Activated T-helper 1 cell treated with anti-CD3 and anti-CD28 coated beads, Interleukin-12 subunit alpha, Interleukin-12 subunit beta, Interleukin-2, Interleukin-4 antibody, amounts not matched to agents 30 ng/mL and 10 ng/mL and 1 ng/mL, durations not matched to agents 14 hours and 24 hours and 36 hours (primary cell): ENCODE measurements at regions of chrX and their contacts with region 1.

Region 1: DNA sequence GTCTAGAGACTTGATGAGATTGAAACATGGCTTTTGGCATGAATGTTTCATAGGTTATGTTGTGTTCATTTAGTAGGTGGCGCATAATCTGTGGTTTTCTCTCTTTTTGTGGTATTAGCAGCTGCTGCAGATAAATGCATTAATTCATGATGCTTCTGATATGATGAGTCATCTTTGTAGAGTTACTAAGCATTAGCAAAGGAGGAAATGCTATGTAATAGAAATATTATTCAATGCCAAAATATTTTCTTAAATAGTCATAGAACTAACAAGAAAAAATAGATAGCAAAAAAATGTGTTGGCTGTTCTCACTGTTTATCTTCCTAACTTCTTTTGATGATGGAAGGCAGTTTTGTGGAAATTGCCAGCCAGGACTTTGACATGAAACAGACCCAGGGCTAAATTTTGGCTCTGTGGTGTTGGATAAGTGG is 3.6 kb downstream of the ZXDB start:
- DNase-seq: no peak
- H3K4me3 Mint-ChIP-seq: peak overlapping the region; percentile 78
- H3K27ac Mint-ChIP-seq: peak overlapping the region; percentile 67
- H3K4me1 Mint-ChIP-seq: peaks cover 34% of the 10 kb centered on the region
- H3K27me3 Mint-ChIP-seq: no peaks in the 10 kb centered on the region

Region 2: DNA sequence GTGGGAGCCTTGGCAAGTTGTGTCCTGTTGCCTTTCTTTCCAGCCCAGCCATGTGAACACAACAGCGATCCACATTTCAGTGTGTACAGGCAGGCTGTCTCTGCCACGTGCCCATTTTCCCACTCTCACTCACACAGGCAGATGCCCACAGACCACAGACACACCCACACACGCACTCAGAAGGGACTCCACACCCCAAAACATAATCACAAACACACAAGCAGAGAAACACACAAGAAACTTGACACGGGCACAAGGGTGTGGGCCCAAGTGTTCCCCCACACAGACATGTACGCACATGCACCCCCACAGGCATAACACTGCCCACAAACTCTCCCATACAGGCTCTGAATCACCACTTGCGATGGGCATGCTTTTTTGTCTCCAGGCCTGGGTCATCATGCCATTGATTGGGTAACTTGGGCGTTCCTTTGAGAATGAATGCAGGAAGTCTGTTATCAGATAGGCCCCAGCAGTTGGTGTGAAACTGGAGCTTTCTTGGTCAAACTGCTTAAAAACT is 782.0 kb before region 1 on chrX:
- intact Hi-C with region 1: loop called (anchors 5 kb)
- DNase-seq: peak; percentile 32
- H3K4me3 Mint-ChIP-seq: peak overlapping the region; percentile 80
- H3K27ac Mint-ChIP-seq: peak overlapping the region; percentile 97
- H3K4me1 Mint-ChIP-seq: peaks cover 38% of the 10 kb centered on the region
- H3K27me3 Mint-ChIP-seq: no peaks in the 10 kb centered on the region

Region 3: DNA sequence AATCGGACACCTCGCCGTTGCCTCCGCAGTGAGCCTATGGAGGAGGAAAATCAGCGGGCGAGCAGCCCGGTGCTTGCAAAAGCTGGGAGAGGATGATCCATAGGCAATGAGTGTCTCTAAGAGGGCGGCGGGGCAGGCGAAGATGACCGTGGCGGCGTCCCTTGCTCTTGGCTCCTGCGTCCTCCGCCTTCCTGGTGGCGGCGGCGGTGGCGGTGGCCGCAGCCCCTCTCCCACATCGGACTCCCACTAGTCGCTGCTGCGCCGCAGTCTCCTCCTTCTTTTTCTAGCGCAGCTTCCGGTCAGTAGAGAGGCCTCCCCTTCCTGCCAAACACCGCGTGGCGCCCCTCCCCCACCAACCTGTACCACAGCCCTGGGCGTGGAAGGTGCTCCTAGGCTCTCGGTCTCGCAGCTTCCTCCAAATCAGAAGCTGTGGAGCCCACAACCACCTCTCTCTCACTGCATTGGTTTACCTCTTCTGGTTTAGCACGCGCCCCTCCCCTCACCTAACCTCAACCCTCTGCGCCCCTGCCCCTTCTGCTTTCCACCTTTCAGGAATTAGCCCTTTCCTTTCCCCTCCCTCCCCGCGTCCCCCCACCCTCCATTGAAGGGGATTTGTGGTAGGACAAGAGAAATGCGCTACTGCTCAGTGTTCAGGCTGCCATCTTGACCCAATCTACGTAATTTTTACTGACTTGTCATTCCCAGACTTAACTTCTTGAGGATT is 600.0 kb before region 1 on chrX and contains the start of gene SPIN3:
- intact Hi-C with region 1: loop called (anchors 5 kb)
- DNase-seq: peak; percentile 42
- H3K4me3 Mint-ChIP-seq: peak within 1 kb of the TSS; percentile 90
- H3K27ac Mint-ChIP-seq: peak within 1 kb of the TSS; percentile 83
- H3K4me1 Mint-ChIP-seq: peaks cover 18% of the 10 kb centered on the region
- H3K27me3 Mint-ChIP-seq: no peaks in the 10 kb centered on the region
- total RNA-seq, gene SPIN3: 9.4 and 9.6 TPM in 2 replicates

Region 4: DNA sequence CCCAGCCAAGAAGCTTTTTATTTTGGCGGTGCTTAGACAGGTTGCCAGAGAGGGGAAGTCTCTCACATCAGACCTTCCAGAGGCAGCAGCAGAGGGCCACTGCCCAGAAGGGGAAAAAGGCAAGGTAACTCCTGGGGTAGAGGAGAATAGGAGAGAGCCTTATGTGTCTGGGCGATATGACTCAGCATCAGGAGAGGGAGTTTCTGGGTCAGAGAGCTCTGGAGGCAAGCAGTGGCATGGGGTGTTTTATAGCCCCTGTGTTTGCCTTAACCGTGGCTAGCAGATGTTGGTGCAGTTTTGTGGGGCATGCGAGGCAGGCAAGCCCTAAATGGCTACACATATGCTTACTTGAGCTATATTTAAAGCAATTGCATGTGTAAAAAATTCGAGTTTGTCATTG is 11.9 kb before region 1 on chrX:
- intact Hi-C with region 1: no loop called
- DNase-seq: no peak
- H3K4me3 Mint-ChIP-seq: no peak overlapping the region
- H3K27ac Mint-ChIP-seq: no peak overlapping the region
- H3K4me1 Mint-ChIP-seq: no peaks in the 10 kb centered on the region
- H3K27me3 Mint-ChIP-seq: no peaks in the 10 kb centered on the region

Region 5: DNA sequence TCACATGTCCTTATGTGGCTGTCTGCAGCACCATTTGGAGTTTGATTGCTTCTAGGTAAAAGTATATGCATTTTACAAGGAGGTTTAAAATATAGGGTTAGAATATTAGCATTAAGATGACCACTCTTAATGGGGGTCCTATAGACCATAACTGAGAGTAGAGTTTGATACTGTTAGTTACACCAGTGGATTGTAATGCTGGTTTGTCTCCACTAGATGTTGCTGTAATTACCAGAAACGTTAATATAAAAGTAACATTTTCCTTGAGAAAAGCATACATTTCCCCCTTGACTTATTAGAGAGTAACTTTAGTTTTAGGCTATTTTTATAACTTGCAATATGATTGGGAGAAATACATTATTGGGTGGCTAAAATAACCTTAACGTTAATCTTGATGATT is 221.9 kb after region 1 on chrX:
- intact Hi-C with region 1: no loop called
- DNase-seq: no peak
- H3K4me3 Mint-ChIP-seq: no peak overlapping the region
- H3K27ac Mint-ChIP-seq: no peak overlapping the region
- H3K4me1 Mint-ChIP-seq: no peaks in the 10 kb centered on the region
- H3K27me3 Mint-ChIP-seq: peaks cover 2% of the 10 kb centered on the region

Region 6: GRCh38 chrX:57906790-57907189 is 311.4 kb after region 1 on chrX:
- intact Hi-C with region 1: loop called (anchors 5 kb)
- DNase-seq: no peak
- H3K4me3 Mint-ChIP-seq: peak overlapping the region; percentile 53
- H3K27ac Mint-ChIP-seq: no peak overlapping the region
- H3K4me1 Mint-ChIP-seq: peaks cover 39% of the 10 kb centered on the region
- H3K27me3 Mint-ChIP-seq: no peaks in the 10 kb centered on the region